Lower leg skin (tissue), 4 donors: ENCODE measurements at regions of chr2 and their contacts with region 1.

Region 1: DNA sequence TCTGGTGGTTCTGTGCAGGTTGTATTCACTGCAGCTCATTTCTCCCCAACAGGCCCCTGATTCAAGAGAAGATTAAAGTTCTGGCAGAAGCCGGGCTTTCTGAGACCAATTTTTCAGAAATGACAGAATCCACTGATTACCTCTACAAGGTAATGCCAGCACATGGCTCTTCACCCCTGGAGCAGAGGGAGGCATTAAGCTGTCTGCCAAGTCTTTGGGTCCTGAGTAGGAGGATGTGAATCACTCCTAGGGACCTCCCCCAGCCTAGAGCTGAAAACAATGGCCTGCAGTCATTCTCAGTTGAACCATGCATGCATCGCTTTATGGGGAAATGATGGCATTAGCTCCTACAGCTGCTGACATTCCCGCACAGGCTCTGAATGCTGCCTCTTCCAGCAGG is 20.5 kb upstream of the RPL37A start:
- DNase-seq: no peak
- H3K4me3 ChIP-seq: no peak overlapping the region
- CTCF ChIP-seq: no peak
- POLR2A ChIP-seq: no peak

Region 2: DNA sequence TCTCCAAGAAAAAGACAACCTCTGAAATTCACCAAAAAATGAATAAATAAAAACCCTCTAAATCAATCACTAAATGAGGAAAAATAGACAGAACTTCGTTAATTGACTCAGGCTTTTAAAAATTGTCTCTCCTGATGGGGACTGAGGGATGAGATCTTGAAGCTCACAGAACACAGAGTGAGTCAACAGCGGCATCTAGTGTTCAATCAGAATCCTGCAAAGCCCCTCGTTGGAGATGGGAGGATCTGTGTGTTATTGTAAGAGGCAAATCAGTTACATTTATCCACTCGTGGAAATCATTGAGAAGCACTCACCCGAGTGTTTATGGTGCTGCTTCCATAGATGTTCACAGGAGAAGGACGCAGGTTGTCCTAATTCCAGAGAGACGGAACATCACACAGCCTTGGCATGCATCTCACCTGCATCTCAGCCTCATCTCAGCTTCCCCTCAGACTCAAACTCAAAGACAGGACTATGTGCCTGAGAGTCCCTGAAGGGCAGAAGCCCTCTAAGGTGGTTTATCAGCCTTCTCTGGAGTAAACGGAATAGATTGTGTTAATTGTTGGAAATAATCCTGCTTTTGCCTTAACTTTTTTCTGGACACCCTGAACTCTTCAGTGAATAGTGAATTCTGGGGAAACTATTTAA is 546.8 kb before region 1 on chr2:
- intact Hi-C with region 1: no loop called
- DNase-seq: peak; percentile 69 to 85
- H3K4me3 ChIP-seq: no peak overlapping the region
- CTCF ChIP-seq: peak in 1 of 3 donors; percentile 40
- POLR2A ChIP-seq: no peak

Region 3: DNA sequence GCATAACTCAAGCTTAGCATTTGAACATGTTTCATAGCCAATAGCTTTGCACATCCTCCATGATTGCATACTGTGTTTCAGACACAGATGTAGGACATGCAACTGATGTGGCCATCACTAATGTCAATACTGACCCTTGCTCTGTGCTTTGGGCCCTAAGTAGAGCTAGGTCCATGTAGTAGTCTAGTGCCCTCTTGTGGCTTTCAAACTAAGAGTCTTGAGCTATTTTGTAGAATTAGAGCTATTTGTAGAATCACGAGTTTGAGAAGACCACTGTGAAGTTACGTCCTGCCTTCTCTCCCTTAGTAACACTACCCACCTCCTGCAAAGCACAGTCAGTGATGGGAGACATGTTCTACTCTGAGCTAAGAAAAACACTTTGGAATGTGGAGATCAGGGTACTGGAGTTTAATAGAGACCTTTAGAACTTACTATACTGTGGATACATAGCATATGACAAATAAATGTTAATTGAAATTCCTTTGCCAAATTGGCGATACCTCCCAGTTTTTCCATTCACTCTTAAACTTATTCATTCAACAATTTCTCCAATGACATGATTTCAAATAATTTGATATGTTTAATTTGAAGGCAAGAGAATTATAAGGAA is 688.2 kb after region 1 on chr2:
- intact Hi-C with region 1: loop called (anchors 5 kb)
- DNase-seq: no peak
- H3K4me3 ChIP-seq: no peak overlapping the region
- CTCF ChIP-seq: no peak
- POLR2A ChIP-seq: no peak